Thyroid gland (tissue), 4 donors: ENCODE measurements at regions of chr7 and their contacts with region 1.

Region 1: DNA sequence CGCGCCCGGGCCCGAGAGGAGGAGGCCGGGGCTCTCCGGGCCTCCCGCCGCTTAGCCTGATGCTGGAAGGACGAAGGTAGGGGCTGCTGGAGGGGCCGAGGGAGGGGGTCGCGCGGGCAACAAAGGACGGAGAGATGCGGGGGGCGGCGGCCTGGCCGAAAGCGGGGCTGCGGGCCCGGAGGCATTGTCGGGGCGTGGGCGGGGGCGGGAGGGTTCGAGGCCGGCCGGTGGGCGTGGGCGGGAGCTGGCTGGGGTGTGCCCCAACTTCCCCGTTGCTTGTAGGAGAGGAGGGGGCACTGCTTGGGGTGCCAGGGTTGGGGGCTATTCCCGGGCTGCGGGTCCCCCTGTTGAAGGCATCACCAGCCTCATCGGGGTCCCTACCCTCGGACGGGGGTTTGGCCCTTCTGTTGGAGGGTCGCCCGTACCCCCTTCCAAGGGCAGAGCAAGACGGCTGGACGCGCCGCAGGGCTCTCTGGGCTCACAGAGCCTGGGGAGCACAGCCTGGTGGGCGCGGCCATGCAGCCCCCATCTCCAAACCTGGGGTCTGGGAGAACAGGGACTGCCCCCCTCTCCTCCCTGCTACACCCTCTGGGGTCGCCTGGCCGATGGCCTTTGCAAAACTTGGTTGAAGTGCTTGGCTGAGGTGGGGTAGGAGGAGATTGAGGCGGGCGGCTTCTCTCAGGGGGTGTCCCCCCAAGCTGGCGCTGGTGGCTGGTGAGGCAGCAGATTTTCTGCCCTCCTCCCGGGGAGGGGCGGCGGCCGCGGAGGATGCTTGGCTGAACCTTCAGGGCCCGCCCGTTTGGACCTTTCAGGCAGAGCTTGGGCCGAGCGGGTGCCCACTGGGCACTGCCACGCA is 680 bp downstream of the CLIP2 start:
- DNase-seq: peak; percentile 22 to 30
- H3K4me3 ChIP-seq: peak overlapping the region in 2 of 3 donors; percentile 58 to 71
- H3K27ac ChIP-seq: peak overlapping the region in 2 of 3 donors; percentile 66 to 70
- H3K4me1 ChIP-seq: peaks cover 18 to 28% of the 10 kb centered on the region in 2 donors
- H3K27me3 ChIP-seq: no peaks in the 10 kb centered on the region
- CTCF ChIP-seq: no peak
- POLR2A ChIP-seq: no peak

Region 2: GRCh38 chr7:74256491-74257408 is 33.1 kb before region 1 on chr7:
- intact Hi-C with region 1: loop called (anchors 5 kb)
- DNase-seq: no peak
- H3K4me3 ChIP-seq: no peak overlapping the region
- H3K27ac ChIP-seq: peak overlapping the region in 2 of 3 donors; percentile 4 to 29
- H3K4me1 ChIP-seq: peaks cover 3 to 25% of the 10 kb centered on the region in 2 donors
- H3K27me3 ChIP-seq: no peaks in the 10 kb centered on the region
- CTCF ChIP-seq: no peak
- POLR2A ChIP-seq: no peak